ENCODE measurements at regions of chr15 and their contacts with region 1.

Region 1: GRCh38 chr15:90482124-90483011 is 47.4 kb upstream of the CRTC3 start:
- DNase-seq: peak; percentile 17 to 71 (median 38)
- ATAC-seq: peak; percentile 63
- H3K4me3 ChIP-seq: no peak overlapping the region
- H3K4me3 Mint-ChIP-seq: no peak overlapping the region
- H3K27ac ChIP-seq: no peak overlapping the region
- H3K27ac Mint-ChIP-seq: no peak overlapping the region
- H3K4me1 ChIP-seq: peaks cover 20% of the 10 kb centered on the region
- H3K4me1 Mint-ChIP-seq: peaks cover 36% of the 10 kb centered on the region
- H3K27me3 ChIP-seq: no peaks in the 10 kb centered on the region
- H3K27me3 Mint-ChIP-seq: no peaks in the 10 kb centered on the region
- CTCF ChIP-seq: peak; percentile 80

Region 2: DNA sequence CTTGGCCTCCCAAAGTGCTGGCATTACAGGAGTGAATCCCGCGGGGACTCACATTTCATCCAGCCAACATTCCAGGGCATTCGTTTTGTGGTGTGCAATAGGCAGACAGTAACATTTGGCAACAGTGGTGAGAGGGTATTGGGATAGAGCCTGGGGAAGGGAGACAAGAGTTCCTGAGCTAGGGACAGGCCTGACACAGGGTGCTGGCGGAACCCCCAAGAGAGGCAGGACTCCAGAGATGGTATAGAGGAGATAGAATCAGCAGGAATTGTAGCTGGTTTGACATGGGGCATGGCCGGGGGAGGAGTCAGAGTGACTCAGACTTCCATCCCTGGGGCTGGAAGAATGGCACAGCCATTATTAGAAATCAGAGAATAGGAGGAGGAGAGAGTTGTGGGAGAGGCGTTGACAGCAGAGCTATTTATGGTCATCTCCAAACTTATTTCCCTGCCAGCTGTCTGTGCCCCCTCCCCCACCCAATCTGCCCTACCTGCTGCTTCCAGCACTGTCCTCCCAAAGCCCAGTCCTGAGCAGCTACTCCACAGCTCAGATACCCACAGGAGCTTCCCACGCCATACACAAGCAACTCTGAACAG is 375.7 kb before region 1 on chr15:
- CTCF ChIA-PET with region 1: no interaction called
- POLR2A ChIA-PET with region 1: no interaction called
- intact Hi-C with region 1: no loop called
- DNase-seq: no peak
- ATAC-seq: no peak
- H3K4me3 ChIP-seq: no peak overlapping the region
- H3K4me3 Mint-ChIP-seq: no peak overlapping the region
- H3K27ac ChIP-seq: no peak overlapping the region
- H3K27ac Mint-ChIP-seq: no peak overlapping the region
- H3K4me1 ChIP-seq: peaks cover 9% of the 10 kb centered on the region
- H3K4me1 Mint-ChIP-seq: peaks cover 15% of the 10 kb centered on the region
- H3K27me3 ChIP-seq: no peaks in the 10 kb centered on the region
- H3K27me3 Mint-ChIP-seq: no peaks in the 10 kb centered on the region
- CTCF ChIP-seq: no peak

Region 3: GRCh38 chr15:90419738-90420406 is 62.5 kb before region 1 on chr15:
- CTCF ChIA-PET with region 1: interaction called, 3 read pairs
- POLR2A ChIA-PET with region 1: no interaction called
- intact Hi-C with region 1: loop called in 1 of 2 experiments (anchors 10 kb)
- DNase-seq: no peak
- ATAC-seq: no peak
- H3K4me3 ChIP-seq: no peak overlapping the region
- H3K4me3 Mint-ChIP-seq: peak overlapping the region; percentile 26
- H3K27ac ChIP-seq: no peak overlapping the region
- H3K27ac Mint-ChIP-seq: peak overlapping the region; percentile 71
- H3K4me1 ChIP-seq: peaks cover 38% of the 10 kb centered on the region
- H3K4me1 Mint-ChIP-seq: peaks cover 72% of the 10 kb centered on the region
- H3K27me3 ChIP-seq: no peaks in the 10 kb centered on the region
- H3K27me3 Mint-ChIP-seq: no peaks in the 10 kb centered on the region
- CTCF ChIP-seq: no peak

Region 4: DNA sequence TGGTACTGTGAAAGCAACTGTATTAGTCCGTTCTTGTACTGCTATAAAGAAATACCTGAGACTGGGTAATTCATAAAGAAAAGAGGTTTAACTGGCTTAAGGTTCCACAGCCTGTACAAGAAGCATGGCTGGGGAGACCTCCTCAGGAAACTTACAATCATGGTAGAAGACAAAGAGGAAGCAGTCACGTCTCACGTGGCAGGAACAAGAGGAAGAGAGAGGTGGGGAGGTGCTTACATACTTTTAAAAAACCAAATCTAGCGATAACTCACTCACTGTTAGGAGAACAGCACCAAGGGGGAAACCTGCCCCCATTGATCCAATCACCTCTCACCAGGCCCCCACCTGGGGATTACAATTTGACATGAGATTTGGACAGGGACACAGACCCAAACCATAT is 45.4 kb before region 1 on chr15:
- CTCF ChIA-PET with region 1: no interaction called
- POLR2A ChIA-PET with region 1: no interaction called
- intact Hi-C with region 1: loop called in 1 of 2 experiments (anchors 5 kb)
- DNase-seq: peak in 1 of 14 experiments; percentile 23
- ATAC-seq: no peak
- H3K4me3 ChIP-seq: no peak overlapping the region
- H3K4me3 Mint-ChIP-seq: no peak overlapping the region
- H3K27ac ChIP-seq: no peak overlapping the region
- H3K27ac Mint-ChIP-seq: peak overlapping the region; percentile 4
- H3K4me1 ChIP-seq: no peaks in the 10 kb centered on the region
- H3K4me1 Mint-ChIP-seq: peaks cover 27% of the 10 kb centered on the region
- H3K27me3 ChIP-seq: no peaks in the 10 kb centered on the region
- H3K27me3 Mint-ChIP-seq: no peaks in the 10 kb centered on the region
- CTCF ChIP-seq: no peak

Region 5: GRCh38 chr15:90954712-90955671 is 472.6 kb after region 1 on chr15 and contains the start of gene RCCD1:
- CTCF ChIA-PET with region 1: no interaction called
- POLR2A ChIA-PET with region 1: no interaction called
- intact Hi-C with region 1: no loop called
- DNase-seq: peak; percentile 71 to 94 (median 80)
- ATAC-seq: peak; percentile 92
- H3K4me3 ChIP-seq: peak within 1 kb of the TSS; percentile 74
- H3K4me3 Mint-ChIP-seq: peak within 1 kb of the TSS; percentile 87
- H3K27ac ChIP-seq: peak within 1 kb of the TSS; percentile 87 to 92
- H3K27ac Mint-ChIP-seq: peak within 1 kb of the TSS; percentile 88
- H3K4me1 ChIP-seq: peaks cover 26% of the 10 kb centered on the region
- H3K4me1 Mint-ChIP-seq: peaks cover 9% of the 10 kb centered on the region
- H3K27me3 ChIP-seq: no peaks in the 10 kb centered on the region
- H3K27me3 Mint-ChIP-seq: no peaks in the 10 kb centered on the region
- CTCF ChIP-seq: no peak
- total RNA-seq, gene RCCD1: 4.5 to 4.8 TPM